B cell (primary cell): ENCODE measurements at regions of chr7 and their contacts with region 1.

Region 1: GRCh38 chr7:143214789-143215679 is 6.8 kb upstream of the TAS2R40 start:
- DNase-seq: peak; percentile 90
- ATAC-seq: peak; percentile 97
- H3K4me3 ChIP-seq: no peak overlapping the region
- H3K4me3 Mint-ChIP-seq: no peak overlapping the region
- H3K27ac ChIP-seq: no peak overlapping the region
- H3K27ac Mint-ChIP-seq: no peak overlapping the region
- H3K4me1 ChIP-seq: peaks cover 8 to 12% of the 10 kb centered on the region in 2 donors
- H3K4me1 Mint-ChIP-seq: peaks cover 15% of the 10 kb centered on the region
- H3K27me3 ChIP-seq: no peaks in the 10 kb centered on the region
- H3K27me3 Mint-ChIP-seq: peaks cover 3% of the 10 kb centered on the region
- CTCF ChIP-seq: peak; percentile 100

Region 2: GRCh38 chr7:142632291-142633134 is 582.5 kb before region 1 on chr7:
- CTCF ChIA-PET with region 1: interaction called, 21 read pairs
- POLR2A ChIA-PET with region 1: no interaction called
- intact Hi-C with region 1: loop called (anchors 1 kb)
- DNase-seq: peak; percentile 85
- ATAC-seq: peak; percentile 97
- H3K4me3 ChIP-seq: no peak overlapping the region
- H3K4me3 Mint-ChIP-seq: no peak overlapping the region
- H3K27ac ChIP-seq: no peak overlapping the region
- H3K27ac Mint-ChIP-seq: no peak overlapping the region
- H3K4me1 ChIP-seq: no peaks in the 10 kb centered on the region
- H3K4me1 Mint-ChIP-seq: peaks cover 3% of the 10 kb centered on the region
- H3K27me3 ChIP-seq: peaks cover 0 to 5% (median 2%) of the 10 kb centered on the region in 4 experiments
- H3K27me3 Mint-ChIP-seq: peaks cover 30% of the 10 kb centered on the region
- CTCF ChIP-seq: peak; percentile 85

Region 3: DNA sequence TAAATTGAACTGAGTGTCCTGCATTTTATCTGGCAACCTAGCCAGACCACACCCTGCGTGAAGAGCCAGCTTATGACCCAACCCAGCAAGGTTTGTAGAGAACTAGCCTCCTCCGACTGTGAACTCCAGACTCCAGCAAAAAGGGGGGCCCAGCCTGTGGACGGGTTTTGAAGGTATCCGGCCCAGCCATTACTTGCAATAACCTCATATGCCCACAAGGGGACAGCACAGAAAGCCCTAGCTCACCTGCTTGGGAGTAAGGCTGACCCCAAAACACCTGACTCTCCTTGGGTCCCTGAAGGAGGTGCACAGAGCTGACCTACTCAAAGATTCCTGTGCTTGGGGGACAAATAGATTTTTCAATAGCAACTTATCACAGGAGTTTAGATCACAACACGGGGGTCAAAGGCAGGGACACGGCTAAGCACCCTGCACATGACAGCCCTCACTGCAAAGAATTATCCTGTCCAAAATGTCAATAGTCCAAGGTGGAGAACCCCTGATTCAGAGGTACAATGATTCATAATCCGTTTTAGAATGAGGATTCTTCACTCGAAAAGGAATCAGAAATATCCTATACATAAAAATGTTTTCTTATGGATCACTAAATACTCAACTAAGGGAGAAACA is 334.0 kb before region 1 on chr7:
- CTCF ChIA-PET with region 1: interaction called, 29 read pairs
- POLR2A ChIA-PET with region 1: no interaction called
- intact Hi-C with region 1: loop called (anchors 2 kb)
- DNase-seq: peak; percentile 70
- ATAC-seq: peak; percentile 81
- H3K4me3 ChIP-seq: no peak overlapping the region
- H3K4me3 Mint-ChIP-seq: no peak overlapping the region
- H3K27ac ChIP-seq: no peak overlapping the region
- H3K27ac Mint-ChIP-seq: no peak overlapping the region
- H3K4me1 ChIP-seq: no peaks in the 10 kb centered on the region
- H3K4me1 Mint-ChIP-seq: no peaks in the 10 kb centered on the region
- H3K27me3 ChIP-seq: peaks cover 0 to 8% (median 1%) of the 10 kb centered on the region in 4 experiments
- H3K27me3 Mint-ChIP-seq: peaks cover 13% of the 10 kb centered on the region
- CTCF ChIP-seq: peak; percentile 92

Region 4: DNA sequence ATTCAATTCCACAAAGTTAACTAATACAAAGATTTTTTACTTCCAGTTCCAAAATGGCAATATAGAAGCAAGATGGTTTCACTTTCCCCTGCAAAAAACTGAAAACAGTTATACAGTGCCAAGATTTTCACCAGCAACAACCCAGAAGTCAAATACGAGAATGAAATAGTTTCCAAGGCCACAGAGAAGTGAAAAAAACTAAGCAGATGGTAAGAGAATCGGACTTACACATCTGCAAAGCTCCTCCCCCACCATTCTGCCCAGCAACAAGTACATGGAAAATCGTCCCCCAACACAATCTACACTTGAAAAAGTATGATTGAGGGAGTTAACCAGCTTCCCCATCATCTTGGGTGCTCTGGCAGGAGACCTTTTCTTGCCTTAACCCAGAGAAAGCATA is 222.6 kb before region 1 on chr7:
- CTCF ChIA-PET with region 1: interaction called, 11 read pairs
- POLR2A ChIA-PET with region 1: no interaction called
- intact Hi-C with region 1: no loop called
- DNase-seq: no peak
- ATAC-seq: no peak
- H3K4me3 ChIP-seq: no peak overlapping the region
- H3K4me3 Mint-ChIP-seq: no peak overlapping the region
- H3K27ac ChIP-seq: no peak overlapping the region
- H3K27ac Mint-ChIP-seq: no peak overlapping the region
- H3K4me1 ChIP-seq: no peaks in the 10 kb centered on the region
- H3K4me1 Mint-ChIP-seq: peaks cover 10% of the 10 kb centered on the region
- H3K27me3 ChIP-seq: no peaks in the 10 kb centered on the region
- H3K27me3 Mint-ChIP-seq: peaks cover 24% of the 10 kb centered on the region
- CTCF ChIP-seq: no peak

Region 5: GRCh38 chr7:143188994-143189393 is 26.0 kb before region 1 on chr7:
- CTCF ChIA-PET with region 1: interaction called, 11 read pairs
- POLR2A ChIA-PET with region 1: no interaction called
- intact Hi-C with region 1: no loop called
- DNase-seq: no peak
- ATAC-seq: no peak
- H3K4me3 ChIP-seq: no peak overlapping the region
- H3K4me3 Mint-ChIP-seq: no peak overlapping the region
- H3K27ac ChIP-seq: no peak overlapping the region
- H3K27ac Mint-ChIP-seq: no peak overlapping the region
- H3K4me1 ChIP-seq: peaks cover under 1% of the 10 kb centered on the region in 2 donors
- H3K4me1 Mint-ChIP-seq: peaks cover 7% of the 10 kb centered on the region
- H3K27me3 ChIP-seq: no peaks in the 10 kb centered on the region
- H3K27me3 Mint-ChIP-seq: no peaks in the 10 kb centered on the region
- CTCF ChIP-seq: no peak